ENCODE measurements at regions of chr1 and their contacts with region 1.

Region 1: GRCh38 chr1:234373064-234373958 is at the start of gene COA6:
- DNase-seq: peak; percentile 100
- H3K4me3 Mint-ChIP-seq: peak within 1 kb of the TSS; percentile 91
- H3K27ac Mint-ChIP-seq: peak within 1 kb of the TSS; percentile 98
- H3K4me1 Mint-ChIP-seq: peaks cover 44% of the 10 kb centered on the region
- H3K27me3 Mint-ChIP-seq: no peaks in the 10 kb centered on the region
- CTCF ChIP-seq: no peak
- total RNA-seq, gene COA6: 114 and 115 TPM in 2 replicates

Region 2: GRCh38 chr1:234154320-234155251 is 218.7 kb before region 1 on chr1:
- CTCF ChIA-PET with region 1: interaction called, 5 read pairs
- POLR2A ChIA-PET with region 1: no interaction called
- intact Hi-C with region 1: loop called (anchors 5 kb)
- DNase-seq: peak; percentile 94
- H3K4me3 Mint-ChIP-seq: no peak overlapping the region
- H3K27ac Mint-ChIP-seq: peak overlapping the region; percentile 20
- H3K4me1 Mint-ChIP-seq: peaks cover 2% of the 10 kb centered on the region
- H3K27me3 Mint-ChIP-seq: no peaks in the 10 kb centered on the region
- CTCF ChIP-seq: peak; percentile 99

Region 3: DNA sequence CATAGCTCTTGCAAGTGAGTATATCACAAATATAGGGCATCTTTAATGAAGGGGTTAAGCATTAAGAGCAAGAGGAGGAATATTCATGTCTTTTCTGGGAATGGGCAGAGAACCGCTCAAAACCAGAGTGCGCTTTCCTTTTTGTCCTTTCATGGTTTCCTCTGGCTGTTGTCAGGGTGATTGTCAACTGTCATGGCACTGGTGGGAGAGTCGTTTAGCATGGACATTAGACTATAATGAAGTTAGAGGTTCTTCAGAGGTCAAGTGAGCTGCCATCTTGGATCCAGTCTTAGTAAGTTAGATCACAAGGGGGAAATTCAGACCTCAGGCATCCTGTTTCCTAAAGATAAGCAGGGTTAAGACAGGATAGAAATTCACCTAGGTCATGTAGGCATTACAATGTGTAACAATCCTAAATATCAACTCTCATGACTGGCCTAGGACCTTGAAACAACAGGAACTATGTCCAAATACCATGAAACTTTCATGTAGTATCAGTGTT is 12.2 kb before region 1 on chr1:
- CTCF ChIA-PET with region 1: interaction called, 16 read pairs
- POLR2A ChIA-PET with region 1: interaction called, 218 read pairs
- intact Hi-C with region 1: loop called (anchors 1 kb)
- DNase-seq: no peak
- H3K4me3 Mint-ChIP-seq: no peak overlapping the region
- H3K27ac Mint-ChIP-seq: no peak overlapping the region
- H3K4me1 Mint-ChIP-seq: peaks cover 12% of the 10 kb centered on the region
- H3K27me3 Mint-ChIP-seq: no peaks in the 10 kb centered on the region
- CTCF ChIP-seq: no peak

Region 4: DNA sequence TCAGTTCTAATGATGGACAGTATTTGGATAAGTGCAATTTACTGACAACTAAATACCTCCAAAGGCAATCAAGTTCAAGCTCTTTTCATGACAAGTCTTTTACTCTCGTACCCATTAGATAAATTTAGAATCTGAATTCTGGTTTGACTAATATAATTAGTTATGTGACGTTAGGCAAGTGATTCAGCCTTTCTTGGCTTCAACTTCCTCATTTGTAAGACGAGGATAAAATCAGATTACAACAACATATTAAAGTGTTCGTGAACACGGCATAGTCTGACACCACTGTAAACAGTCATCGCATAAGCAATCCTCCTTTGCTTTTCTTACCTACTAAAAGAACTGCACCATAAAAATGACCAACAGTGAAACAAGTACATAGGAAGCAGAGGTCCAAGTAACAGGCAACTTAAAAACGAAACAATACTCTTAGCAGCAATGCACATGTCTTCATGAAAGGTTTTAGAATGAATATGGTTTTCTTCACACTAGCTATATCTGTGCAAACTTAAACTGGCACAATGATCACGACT is 25.6 kb after region 1 on chr1:
- CTCF ChIA-PET with region 1: interaction called, 3 read pairs
- POLR2A ChIA-PET with region 1: interaction called, 36 read pairs
- intact Hi-C with region 1: no loop called
- DNase-seq: peak; percentile 59
- H3K4me3 Mint-ChIP-seq: no peak overlapping the region
- H3K27ac Mint-ChIP-seq: peak overlapping the region; percentile 59
- H3K4me1 Mint-ChIP-seq: peaks cover 28% of the 10 kb centered on the region
- H3K27me3 Mint-ChIP-seq: no peaks in the 10 kb centered on the region
- CTCF ChIP-seq: no peak

Region 5: DNA sequence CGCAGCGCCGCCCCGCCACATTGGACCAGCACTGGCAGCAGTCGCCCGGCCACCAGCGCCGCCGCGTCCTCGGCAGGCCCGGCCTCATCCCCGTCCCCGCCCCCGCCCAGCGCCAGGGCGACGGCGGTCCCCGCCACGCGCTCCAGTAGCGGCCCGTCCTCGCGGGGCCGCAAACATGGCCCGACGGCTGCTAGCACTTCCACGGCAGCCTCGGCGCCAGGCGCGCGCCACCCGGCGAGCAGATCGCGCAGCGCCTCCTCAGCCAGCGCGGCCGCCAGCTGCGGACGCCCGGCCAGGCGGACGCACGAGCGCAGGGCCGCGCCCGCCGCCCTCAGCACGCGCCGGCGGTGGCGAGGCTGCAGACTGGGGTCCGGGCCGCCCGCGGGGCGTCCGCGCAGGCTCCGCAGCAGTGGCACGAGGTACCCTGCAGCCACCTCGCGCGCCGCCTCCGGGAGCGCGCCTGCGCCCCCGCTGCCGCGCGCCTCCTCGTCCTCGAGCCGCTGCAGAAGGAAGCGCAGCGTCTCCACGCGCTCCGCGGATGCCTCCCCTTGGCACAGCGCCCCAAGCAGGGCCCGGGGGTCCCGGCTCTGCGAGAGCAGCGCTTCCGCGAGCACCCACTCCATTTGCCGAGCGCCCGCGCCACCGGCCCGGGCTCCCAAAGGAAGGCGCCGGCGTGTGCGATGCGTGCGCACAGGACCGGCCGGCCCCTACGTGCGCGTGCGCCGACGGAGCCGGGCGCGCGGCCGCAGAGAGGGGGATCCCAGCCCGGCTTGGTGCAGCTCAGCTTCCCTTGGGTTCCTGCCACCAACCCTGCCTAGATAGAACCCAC is 105.4 kb after region 1 on chr1 and contains the start of gene TARBP1:
- CTCF ChIA-PET with region 1: no interaction called
- POLR2A ChIA-PET with region 1: interaction called, 59 read pairs
- intact Hi-C with region 1: loop called (anchors 5 kb)
- DNase-seq: peak; percentile 89
- H3K4me3 Mint-ChIP-seq: peak within 1 kb of the TSS; percentile 77
- H3K27ac Mint-ChIP-seq: no peak within 1 kb of the TSS
- H3K4me1 Mint-ChIP-seq: peaks cover 31% of the 10 kb centered on the region
- H3K27me3 Mint-ChIP-seq: peaks cover 23% of the 10 kb centered on the region
- CTCF ChIP-seq: no peak
- total RNA-seq, gene TARBP1: 45.5 and 52.5 TPM in 2 replicates